ENCODE measurements at regions of chr3 and their contacts with region 1.

Region 1: DNA sequence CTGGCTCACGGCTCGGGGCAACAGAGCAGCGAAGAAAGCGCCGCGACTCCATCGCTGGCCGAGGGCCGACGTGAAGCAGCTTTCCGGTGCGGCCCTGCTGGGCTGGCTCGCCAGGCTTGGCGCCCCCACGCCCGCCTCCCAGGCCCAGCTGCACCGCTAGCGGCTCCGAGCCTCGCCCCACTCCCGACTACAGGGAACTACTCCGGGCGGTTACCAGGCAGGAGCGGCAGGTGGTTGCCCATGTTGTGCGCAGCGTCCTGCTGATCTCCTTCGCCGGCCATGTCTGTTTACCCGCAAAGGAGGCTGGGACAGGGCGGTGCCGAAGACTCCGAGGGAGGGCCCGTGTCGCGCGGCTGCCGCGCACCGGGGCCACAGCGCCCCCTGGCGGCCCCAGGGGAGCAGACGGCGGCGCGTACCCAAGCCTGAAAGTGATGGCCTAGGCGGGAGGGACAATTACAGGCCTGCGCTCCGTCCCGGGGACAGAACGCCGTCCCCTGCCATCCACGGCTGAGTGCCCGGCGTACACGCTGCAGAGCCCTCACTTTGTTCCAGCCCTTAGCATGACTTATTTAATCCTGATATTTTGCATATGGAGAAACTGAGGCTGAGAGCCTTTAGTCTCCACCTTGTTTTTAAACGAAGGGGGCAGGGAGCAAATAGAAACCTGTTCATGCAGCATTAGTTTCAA is at the start of gene CRBN:
- DNase-seq: peak; percentile 89 to 92
- ATAC-seq: peak; percentile 97 to 99 (median 99)
- H3K4me3 ChIP-seq: peak within 1 kb of the TSS; percentile 92
- H3K27ac ChIP-seq: peak within 1 kb of the TSS; percentile 84
- H3K4me1 ChIP-seq: peaks cover 16% of the 10 kb centered on the region
- H3K27me3 ChIP-seq: no peaks in the 10 kb centered on the region
- CTCF ChIP-seq: peak; percentile 99
- total RNA-seq, gene CRBN: 40.6 to 55.2 (median 47.3) TPM

Region 2: GRCh38 chr3:2862366-2862765 is 317.2 kb before region 1 on chr3:
- intact Hi-C with region 1: no loop called
- DNase-seq: no peak
- ATAC-seq: no peak
- H3K4me3 ChIP-seq: no peak overlapping the region
- H3K27ac ChIP-seq: no peak overlapping the region
- H3K4me1 ChIP-seq: no peaks in the 10 kb centered on the region
- H3K27me3 ChIP-seq: no peaks in the 10 kb centered on the region
- CTCF ChIP-seq: no peak

Region 3: GRCh38 chr3:3126477-3127431 is 52.8 kb before region 1 on chr3 and contains the start of gene TRNT1:
- intact Hi-C with region 1: loop called (anchors 5 kb)
- DNase-seq: peak; percentile 97 to 98
- ATAC-seq: peak; percentile 99 to 100 (median 100)
- H3K4me3 ChIP-seq: peak within 1 kb of the TSS; percentile 100
- H3K27ac ChIP-seq: peak within 1 kb of the TSS; percentile 99
- H3K4me1 ChIP-seq: peaks cover 8% of the 10 kb centered on the region
- H3K27me3 ChIP-seq: no peaks in the 10 kb centered on the region
- CTCF ChIP-seq: no peak
- total RNA-seq, gene TRNT1: 12.2 to 16.2 (median 15.0) TPM